Dendritic cell treated with granulocyte-macrophage colony-stimulating factor and Interleukin-4, amounts not matched to agents 40 ng/mL and 50 ng/mL, for 4 days (primary cell): ENCODE measurements at regions of chr18 and their contacts with region 1.

Region 1: DNA sequence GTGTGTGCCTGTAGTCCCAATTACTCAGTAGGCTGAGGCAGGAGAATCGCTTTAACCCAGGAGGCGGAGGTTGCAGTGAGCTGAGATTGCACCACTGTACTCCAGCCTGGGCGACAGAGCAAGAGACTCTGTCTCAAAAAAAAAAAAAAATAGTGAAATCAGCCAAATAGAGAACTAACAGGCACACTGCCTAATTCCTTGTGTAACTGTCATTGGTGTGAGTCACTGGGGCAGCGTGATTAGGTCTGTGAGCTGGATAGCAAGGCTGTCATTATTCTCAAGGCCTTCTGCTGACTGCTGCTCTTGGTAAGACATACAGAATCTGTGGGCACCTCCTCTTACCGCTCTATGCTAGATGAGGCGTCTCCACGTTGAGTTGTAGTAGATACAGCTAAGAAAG is 270.3 kb downstream of the NEDD4L start:
- H3K4me3 Mint-ChIP-seq: no peak overlapping the region
- H3K27ac Mint-ChIP-seq: no peak overlapping the region
- H3K4me1 Mint-ChIP-seq: peaks cover 31% of the 10 kb centered on the region
- H3K27me3 Mint-ChIP-seq: peaks cover 2% of the 10 kb centered on the region

Region 2: DNA sequence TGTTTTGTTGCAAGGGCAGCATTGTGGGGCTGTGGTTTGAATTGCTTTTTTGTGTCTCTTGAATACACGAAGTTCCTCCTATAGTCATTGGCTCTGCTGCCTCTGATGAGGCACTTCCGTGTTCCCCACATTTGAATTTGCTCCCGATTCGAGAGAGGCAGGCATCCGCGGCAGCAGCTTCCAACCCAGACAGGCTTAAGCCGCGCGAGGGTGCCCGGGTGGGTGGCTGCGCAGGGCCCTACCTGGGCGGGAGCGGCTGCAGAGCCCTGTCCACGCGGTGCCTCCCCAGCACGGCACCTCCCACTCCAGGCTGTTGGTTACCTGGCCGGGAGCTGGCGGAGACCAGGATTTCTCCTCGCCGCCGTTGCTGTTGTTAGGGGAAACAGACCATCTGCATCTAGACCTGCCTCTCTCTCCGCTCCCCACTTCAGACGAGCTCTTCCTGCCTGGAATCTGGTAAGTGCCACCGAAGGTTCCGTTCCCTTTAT is 119.0 kb before region 1 on chr18:
- intact Hi-C with region 1: loop called (anchors 10 kb)
- H3K4me3 Mint-ChIP-seq: peak overlapping the region; percentile 81
- H3K27ac Mint-ChIP-seq: peak overlapping the region; percentile 76
- H3K4me1 Mint-ChIP-seq: peaks cover 27% of the 10 kb centered on the region
- H3K27me3 Mint-ChIP-seq: peaks cover 40% of the 10 kb centered on the region